GM23248 (cell line): ENCODE measurements at regions of chr5 and their contacts with region 1.

Region 1: GRCh38 chr5:168219515-168220410 is 71.7 kb upstream of the WWC1 start:
- DNase-seq: peak; percentile 78
- H3K4me3 ChIP-seq: peak overlapping the region; percentile 5; the same call in 1 of the 2 replicates
- H3K27ac ChIP-seq: no peak overlapping the region
- H3K4me1 ChIP-seq: no peaks in the 10 kb centered on the region
- H3K27me3 ChIP-seq: no peaks in the 10 kb centered on the region

Region 2: GRCh38 chr5:167587772-167588437 is 631.9 kb before region 1 on chr5:
- in situ Hi-C with region 1: loop called (anchors 10 kb)
- DNase-seq: peak; percentile 54
- H3K4me3 ChIP-seq: no peak overlapping the region
- H3K27ac ChIP-seq: no peak overlapping the region
- H3K4me1 ChIP-seq: peaks cover 7% of the 10 kb centered on the region
- H3K27me3 ChIP-seq: no peaks in the 10 kb centered on the region